ENCODE measurements at regions of chr2 and their contacts with region 1.

Region 1: DNA sequence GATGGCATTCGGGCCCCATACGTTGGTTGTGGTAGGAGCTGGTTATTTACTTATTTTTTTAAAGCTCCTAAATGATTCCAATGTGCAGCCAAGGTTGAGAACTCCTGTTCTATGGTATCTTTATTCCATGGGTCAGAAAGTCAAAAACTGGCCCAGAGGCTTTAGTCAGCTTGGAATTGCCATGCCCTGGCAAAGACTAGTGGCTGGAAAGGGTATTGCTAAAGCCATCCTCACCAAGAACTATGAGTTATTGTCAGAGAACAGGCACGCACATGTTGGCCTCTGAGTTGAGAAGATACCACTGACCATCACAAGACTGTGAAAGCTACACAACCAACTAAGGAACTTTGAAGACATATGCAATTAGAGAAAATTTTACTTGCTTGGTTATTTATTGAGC is 47.9 kb upstream of the ACMSD start:
- H3K4me3 Mint-ChIP-seq: no peak overlapping the region
- H3K27ac Mint-ChIP-seq: no peak overlapping the region
- H3K4me1 Mint-ChIP-seq: peaks cover 22% of the 10 kb centered on the region
- H3K27me3 Mint-ChIP-seq: no peaks in the 10 kb centered on the region

Region 2: GRCh38 chr2:134469516-134470115 is 320.9 kb before region 1 on chr2:
- intact Hi-C with region 1: loop called (anchors 10 kb)
- H3K4me3 Mint-ChIP-seq: no peak overlapping the region
- H3K27ac Mint-ChIP-seq: no peak overlapping the region
- H3K4me1 Mint-ChIP-seq: no peaks in the 10 kb centered on the region
- H3K27me3 Mint-ChIP-seq: no peaks in the 10 kb centered on the region

Region 3: GRCh38 chr2:134539981-134540380 is 250.5 kb before region 1 on chr2:
- intact Hi-C with region 1: no loop called
- H3K4me3 Mint-ChIP-seq: no peak overlapping the region
- H3K27ac Mint-ChIP-seq: no peak overlapping the region
- H3K4me1 Mint-ChIP-seq: no peaks in the 10 kb centered on the region
- H3K27me3 Mint-ChIP-seq: no peaks in the 10 kb centered on the region

Region 4: DNA sequence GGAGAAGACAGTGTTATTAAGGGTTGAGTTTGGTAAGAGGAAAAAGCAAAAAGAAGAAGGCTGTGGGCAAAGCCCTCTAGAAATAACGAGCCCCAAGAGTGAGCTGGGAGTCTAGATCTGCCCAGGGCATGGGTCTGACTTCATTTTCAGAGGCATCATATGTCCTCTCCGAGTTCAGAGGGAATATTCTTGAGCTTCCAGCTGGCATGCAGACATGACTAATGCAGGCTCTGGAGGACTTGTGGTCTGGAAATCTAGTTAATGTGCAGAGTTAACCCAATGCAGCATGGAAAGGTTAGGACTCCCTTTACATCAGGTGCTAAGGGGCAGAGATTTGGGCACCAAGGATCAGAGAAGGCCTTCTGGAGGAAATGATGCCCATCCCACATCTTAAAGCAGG is 55.2 kb after region 1 on chr2:
- intact Hi-C with region 1: no loop called
- H3K4me3 Mint-ChIP-seq: no peak overlapping the region
- H3K27ac Mint-ChIP-seq: no peak overlapping the region
- H3K4me1 Mint-ChIP-seq: no peaks in the 10 kb centered on the region
- H3K27me3 Mint-ChIP-seq: peaks cover 1% of the 10 kb centered on the region